AG04449 (cell line): ENCODE measurements at regions of chr22 and their contacts with region 1.

Region 1: GRCh38 chr22:40645579-40646197 is 9.2 kb upstream of the MRTFA start:
- DNase-seq: no peak
- H3K4me3 ChIP-seq: no peak overlapping the region
- CTCF ChIP-seq: no peak

Region 2: GRCh38 chr22:40426594-40427333 is 218.9 kb before region 1 on chr22:
- CTCF ChIA-PET with region 1: interaction called, 233 read pairs
- POLR2A ChIA-PET with region 1: no interaction called
- DNase-seq: no peak
- H3K4me3 ChIP-seq: no peak overlapping the region
- CTCF ChIP-seq: no peak

Region 3: DNA sequence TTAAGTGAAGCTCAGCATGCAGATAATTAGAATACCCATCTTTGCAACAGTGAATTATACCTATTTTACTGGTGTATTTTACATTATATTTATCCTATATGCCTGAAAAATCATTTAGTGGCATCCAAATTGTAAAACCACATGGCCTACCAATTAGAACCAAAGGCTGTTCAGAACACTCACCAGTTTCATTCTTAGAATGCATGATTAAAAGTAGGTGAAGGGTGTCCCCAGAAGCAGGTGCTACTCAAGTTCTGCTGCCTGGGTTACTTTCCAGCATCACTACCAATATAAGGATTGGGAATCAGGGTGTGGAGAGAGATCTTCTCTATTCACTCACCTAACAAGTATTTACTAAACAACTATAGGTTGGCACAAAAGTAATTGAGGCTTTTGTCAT is 172.0 kb before region 1 on chr22:
- CTCF ChIA-PET with region 1: interaction called, 10 read pairs
- POLR2A ChIA-PET with region 1: no interaction called
- DNase-seq: no peak
- H3K4me3 ChIP-seq: no peak overlapping the region
- CTCF ChIP-seq: no peak

Region 4: DNA sequence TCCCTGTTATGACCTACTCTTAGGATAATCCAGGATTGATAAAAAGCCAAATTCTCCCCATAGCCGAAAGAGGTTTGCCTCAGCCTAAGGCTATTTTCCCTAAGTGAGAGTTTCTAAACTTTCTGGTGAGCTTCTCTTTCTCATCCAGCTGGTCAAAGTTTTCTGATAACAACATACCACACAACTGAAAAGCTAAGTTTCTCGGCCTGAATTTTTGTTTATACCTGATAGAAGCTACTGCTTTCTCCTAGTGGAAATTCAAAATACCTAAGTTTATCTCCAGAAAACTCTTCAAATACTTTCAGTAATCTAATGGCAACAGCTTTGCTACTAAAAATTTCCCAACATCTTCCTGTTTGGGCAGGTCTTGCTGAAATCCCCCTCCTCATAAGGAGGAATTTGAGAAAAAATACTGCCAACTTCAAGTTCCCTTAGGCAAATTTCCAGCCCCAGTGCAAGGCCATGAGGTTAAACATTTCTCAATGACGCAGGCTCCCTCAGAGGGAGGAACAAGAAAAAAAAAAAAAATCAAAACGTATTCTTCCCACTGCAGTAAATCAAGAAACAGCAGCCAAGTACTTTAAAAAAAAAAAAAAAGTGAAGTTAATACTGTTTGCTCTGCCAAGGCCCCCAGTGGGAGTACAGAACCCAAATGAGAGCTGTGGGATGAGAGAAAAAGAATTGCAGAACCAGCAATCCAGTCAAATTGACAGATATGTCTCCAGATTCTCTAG is 136.1 kb before region 1 on chr22:
- CTCF ChIA-PET with region 1: interaction called, 20 read pairs
- POLR2A ChIA-PET with region 1: no interaction called
- DNase-seq: peak; percentile 89
- H3K4me3 ChIP-seq: no peak overlapping the region
- CTCF ChIP-seq: no peak

Region 5: DNA sequence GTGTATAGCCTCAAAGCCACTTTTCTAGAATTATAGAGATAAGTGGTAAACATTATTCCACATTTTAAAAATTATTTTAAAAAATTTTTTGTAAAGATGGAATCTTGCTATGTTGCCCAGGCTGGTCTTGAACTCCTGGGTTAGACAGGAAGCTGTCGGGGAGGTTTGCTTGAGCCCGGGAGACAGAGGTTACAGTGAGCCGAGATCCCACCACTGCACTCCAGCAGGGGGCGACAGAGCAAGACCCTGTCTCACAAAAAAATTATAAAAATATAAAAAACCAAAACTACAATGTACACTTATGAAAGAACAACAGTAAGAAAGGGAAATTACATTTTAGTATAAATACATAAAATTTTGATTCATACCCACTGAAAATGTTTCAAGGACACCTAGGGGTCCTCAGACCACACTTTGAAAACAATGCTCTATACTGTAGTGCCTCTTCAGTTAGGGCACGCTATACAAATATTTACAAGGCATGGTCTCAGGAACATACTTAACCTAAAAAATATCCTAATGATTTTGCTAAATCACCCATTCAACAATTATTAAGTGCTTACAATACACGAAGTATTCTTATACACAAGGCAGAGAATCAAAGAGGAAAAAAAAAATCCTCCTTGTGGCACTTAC is 120.3 kb before region 1 on chr22:
- CTCF ChIA-PET with region 1: interaction called, 86 read pairs
- POLR2A ChIA-PET with region 1: no interaction called
- DNase-seq: no peak
- H3K4me3 ChIP-seq: no peak overlapping the region
- CTCF ChIP-seq: peak; percentile 59

Region 6: DNA sequence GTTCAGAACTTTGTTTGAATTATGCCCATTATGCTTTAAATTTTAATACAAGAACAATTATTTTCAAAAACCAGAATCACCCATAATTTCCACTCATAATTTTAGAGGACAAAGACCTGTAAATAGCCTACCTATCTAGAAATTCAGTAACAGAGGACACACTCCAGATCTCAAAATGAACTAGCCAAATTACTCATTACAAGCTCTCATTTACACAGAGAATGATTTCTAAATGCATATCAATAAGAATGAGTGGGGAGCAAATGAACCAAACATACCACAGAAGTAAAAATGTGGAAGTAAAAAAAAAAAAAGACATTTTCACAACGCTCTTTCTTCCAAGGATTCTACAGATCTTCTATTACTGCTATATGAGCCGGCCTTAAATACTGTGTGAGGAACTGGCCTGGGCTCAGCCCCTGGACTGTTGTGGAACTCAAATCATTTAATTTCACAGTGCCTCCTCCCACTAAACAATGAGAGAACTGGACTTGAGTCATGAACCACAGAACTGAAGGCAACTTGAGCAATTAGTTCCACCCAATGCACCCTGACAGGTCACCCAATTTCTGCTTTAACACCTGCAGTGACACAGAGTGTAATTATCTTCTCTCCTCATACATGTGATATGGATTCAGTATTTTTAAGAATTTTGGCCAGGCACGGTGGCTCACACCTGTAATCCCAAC is 17.2 kb before region 1 on chr22:
- CTCF ChIA-PET with region 1: interaction called, 52 read pairs
- POLR2A ChIA-PET with region 1: no interaction called
- DNase-seq: no peak
- H3K4me3 ChIP-seq: no peak overlapping the region
- CTCF ChIP-seq: no peak